ENCODE measurements at regions of chr12 and their contacts with region 1.

Region 1: GRCh38 chr12:116697305-116697704 is 40.6 kb downstream of the SPRING1 start:
- DNase-seq: no peak
- ATAC-seq: peak; percentile 85
- H3K4me3 ChIP-seq: no peak overlapping the region
- H3K27ac ChIP-seq: no peak overlapping the region
- H3K4me1 ChIP-seq: peaks cover 13% of the 10 kb centered on the region
- H3K27me3 ChIP-seq: peaks cover 6 to 19% of the 10 kb centered on the region in 2 experiments
- CTCF ChIP-seq: peak; percentile 31 to 51 (median 39); a peak in 4 of 6 replicates
- EP300 ChIP-seq: no peak
- POLR2A ChIP-seq: no peak
- RAD21 ChIP-seq: peak; percentile 78

Region 2: GRCh38 chr12:116076399-116076798 is 620.9 kb before region 1 on chr12:
- CTCF ChIA-PET with region 1: no interaction called
- POLR2A ChIA-PET with region 1: no interaction called
- RAD21 ChIA-PET with region 1: no interaction called
- SMC1A ChIA-PET with region 1: no interaction called
- in situ Hi-C with region 1: no loop called
- intact Hi-C with region 1: no loop called
- DNase-seq: no peak
- ATAC-seq: no peak
- H3K4me3 ChIP-seq: no peak overlapping the region
- H3K27ac ChIP-seq: no peak overlapping the region
- H3K4me1 ChIP-seq: no peaks in the 10 kb centered on the region
- H3K27me3 ChIP-seq: no peaks in the 10 kb centered on the region
- CTCF ChIP-seq: no peak
- EP300 ChIP-seq: no peak
- POLR2A ChIP-seq: no peak
- RAD21 ChIP-seq: no peak

Region 3: DNA sequence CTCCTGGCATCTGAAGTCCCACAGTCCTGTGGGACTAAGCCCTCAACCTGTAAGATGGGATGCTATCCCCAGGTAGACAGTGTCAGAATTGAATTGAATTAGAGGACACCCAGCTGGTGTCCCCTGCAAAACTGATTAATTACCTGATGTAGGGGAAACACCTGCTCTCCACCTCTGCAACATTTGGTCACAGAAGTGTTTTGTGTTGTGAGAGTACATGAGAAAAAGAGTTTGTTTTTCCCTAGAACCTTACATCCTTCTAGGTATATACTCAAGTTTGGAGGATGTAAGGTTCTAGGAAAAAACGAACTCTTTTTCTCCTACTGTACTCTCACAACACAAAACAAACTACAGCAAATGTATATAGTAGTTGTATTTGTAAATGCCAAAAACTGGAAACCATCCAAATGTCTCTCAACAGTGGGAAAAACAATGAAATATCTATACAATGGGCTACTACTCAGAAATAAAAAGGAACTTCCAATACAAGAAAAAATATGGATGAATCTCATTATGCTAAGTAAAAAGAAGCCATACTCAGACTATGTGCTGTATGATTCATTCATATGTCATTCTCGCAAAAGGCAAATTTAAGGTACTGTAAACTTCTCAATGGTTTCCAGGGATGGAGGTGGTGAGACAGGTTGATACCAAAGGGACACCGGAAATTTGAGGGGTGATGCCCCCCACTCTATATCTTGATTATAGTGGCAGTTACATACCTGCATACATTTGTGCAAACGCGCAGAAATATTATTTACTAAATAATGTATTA is 580.5 kb before region 1 on chr12:
- CTCF ChIA-PET with region 1: no interaction called
- POLR2A ChIA-PET with region 1: no interaction called
- RAD21 ChIA-PET with region 1: no interaction called
- SMC1A ChIA-PET with region 1: no interaction called
- in situ Hi-C with region 1: no loop called
- intact Hi-C with region 1: no loop called
- DNase-seq: no peak
- ATAC-seq: no peak
- H3K4me3 ChIP-seq: no peak overlapping the region
- H3K27ac ChIP-seq: no peak overlapping the region
- H3K4me1 ChIP-seq: no peaks in the 10 kb centered on the region
- H3K27me3 ChIP-seq: no peaks in the 10 kb centered on the region
- CTCF ChIP-seq: no peak
- EP300 ChIP-seq: no peak
- POLR2A ChIP-seq: no peak
- RAD21 ChIP-seq: no peak

Region 4: GRCh38 chr12:116525418-116526001 is 171.8 kb before region 1 on chr12:
- CTCF ChIA-PET with region 1: no interaction called
- POLR2A ChIA-PET with region 1: no interaction called
- RAD21 ChIA-PET with region 1: no interaction called
- SMC1A ChIA-PET with region 1: no interaction called
- in situ Hi-C with region 1: no loop called
- intact Hi-C with region 1: no loop called
- DNase-seq: no peak
- ATAC-seq: no peak
- H3K4me3 ChIP-seq: no peak overlapping the region
- H3K27ac ChIP-seq: no peak overlapping the region
- H3K4me1 ChIP-seq: no peaks in the 10 kb centered on the region
- H3K27me3 ChIP-seq: no peaks in the 10 kb centered on the region; a peak in 1 of 4 replicates
- CTCF ChIP-seq: no peak
- EP300 ChIP-seq: no peak
- POLR2A ChIP-seq: no peak
- RAD21 ChIP-seq: no peak

Region 5: GRCh38 chr12:116599285-116600136 is 97.8 kb before region 1 on chr12:
- CTCF ChIA-PET with region 1: no interaction called
- POLR2A ChIA-PET with region 1: no interaction called
- RAD21 ChIA-PET with region 1: interaction called, 3 read pairs
- SMC1A ChIA-PET with region 1: no interaction called
- in situ Hi-C with region 1: no loop called
- intact Hi-C with region 1: loop called (anchors 5 kb)
- DNase-seq: peak; percentile 7
- ATAC-seq: peak; percentile 63
- H3K4me3 ChIP-seq: no peak overlapping the region
- H3K27ac ChIP-seq: no peak overlapping the region
- H3K4me1 ChIP-seq: peaks cover 3% of the 10 kb centered on the region; the same call in 1 of the 2 replicates
- H3K27me3 ChIP-seq: no peaks in the 10 kb centered on the region
- CTCF ChIP-seq: peak; percentile 41 to 57 (median 42)
- EP300 ChIP-seq: no peak
- POLR2A ChIP-seq: no peak
- RAD21 ChIP-seq: peak; percentile 75

Region 6: DNA sequence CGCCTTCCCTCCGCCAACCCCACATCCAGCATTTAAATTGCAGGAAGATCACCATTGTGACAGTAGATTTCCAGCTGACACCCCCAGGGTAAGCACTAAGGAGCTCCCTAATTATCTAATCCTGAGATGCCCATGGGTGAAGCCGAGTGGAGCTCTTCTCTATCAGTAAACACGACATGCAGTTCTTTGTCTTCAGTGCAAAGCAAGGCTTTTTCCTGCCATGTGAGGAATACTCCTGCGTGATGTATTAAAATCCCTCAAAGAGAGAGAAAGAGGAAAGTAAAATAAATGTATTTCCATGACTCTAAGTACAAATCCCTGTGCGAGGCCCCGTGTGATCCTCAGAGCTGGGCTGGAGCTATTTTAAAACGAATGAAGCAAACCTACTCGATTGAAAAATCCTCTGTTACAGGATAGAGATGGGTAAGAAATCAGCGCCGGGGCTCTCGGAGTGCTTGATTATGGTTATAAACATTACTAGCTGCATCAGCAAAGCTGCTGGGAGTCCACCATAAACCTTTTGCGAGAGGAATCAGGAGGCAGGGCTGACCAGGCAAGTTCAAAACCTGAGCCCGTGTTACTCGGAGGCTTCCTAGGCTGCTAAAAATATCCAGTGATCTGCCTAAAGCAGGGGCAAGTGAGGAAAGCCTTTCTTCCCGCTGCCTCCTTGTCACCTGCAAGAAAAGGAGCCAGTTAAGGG is 76.7 kb before region 1 on chr12:
- CTCF ChIA-PET with region 1: interaction called, 3 read pairs
- POLR2A ChIA-PET with region 1: no interaction called
- RAD21 ChIA-PET with region 1: no interaction called
- SMC1A ChIA-PET with region 1: no interaction called
- in situ Hi-C with region 1: no loop called
- intact Hi-C with region 1: loop called (anchors 5 kb)
- DNase-seq: no peak
- ATAC-seq: no peak
- H3K4me3 ChIP-seq: no peak overlapping the region
- H3K27ac ChIP-seq: no peak overlapping the region
- H3K4me1 ChIP-seq: no peaks in the 10 kb centered on the region
- H3K27me3 ChIP-seq: peaks cover 0 to 4% of the 10 kb centered on the region in 2 experiments; a peak in 1 of 4 replicates
- CTCF ChIP-seq: no peak
- EP300 ChIP-seq: no peak
- POLR2A ChIP-seq: no peak
- RAD21 ChIP-seq: no peak